ENCODE measurements at regions of chr1 and their contacts with region 1.

Region 1: GRCh38 chr1:66242646-66243547 is 291.1 kb upstream of the SGIP1 start:
- DNase-seq: peak; percentile 86
- H3K4me3 ChIP-seq: no peak overlapping the region
- CTCF ChIP-seq: peak; percentile 100

Region 2: DNA sequence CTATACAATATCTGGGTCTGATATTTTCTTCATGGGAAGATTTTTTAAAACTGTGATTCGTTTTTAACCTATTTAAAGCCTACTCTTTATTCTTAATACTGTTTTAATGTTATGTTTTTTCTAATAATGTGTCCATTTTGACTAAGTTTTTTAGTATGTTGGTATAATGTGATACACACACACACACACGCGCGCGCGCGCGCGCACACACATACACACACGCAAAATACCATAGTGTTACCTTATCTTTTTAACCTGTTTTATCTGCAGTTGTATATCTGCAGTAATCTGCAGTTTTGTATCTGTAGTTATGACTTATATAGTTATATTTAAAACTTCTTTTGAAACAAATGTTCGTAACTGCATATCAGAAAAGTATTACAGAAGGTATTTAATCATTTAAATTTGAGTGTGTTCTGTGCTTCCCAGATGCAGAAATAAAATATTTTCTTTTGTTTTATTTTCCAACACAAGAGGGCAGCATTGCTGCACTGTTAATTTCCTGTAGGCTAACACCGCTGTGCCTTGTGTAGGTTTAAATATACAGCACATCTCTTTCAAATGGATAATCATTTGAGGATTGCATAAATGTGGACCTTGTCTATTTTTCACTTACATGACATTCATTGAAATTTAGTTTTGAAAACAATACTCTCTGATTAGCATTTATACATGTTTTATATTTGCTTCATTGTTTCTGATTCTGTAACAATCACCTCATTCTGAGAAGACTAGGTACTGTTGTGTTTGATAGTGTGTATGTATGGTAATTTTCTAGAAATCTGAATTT is 284.1 kb before region 1 on chr1:
- in situ Hi-C with region 1: loop called (anchors 25 kb)
- DNase-seq: peak; percentile 49
- H3K4me3 ChIP-seq: no peak overlapping the region
- CTCF ChIP-seq: peak; percentile 36

Region 3: DNA sequence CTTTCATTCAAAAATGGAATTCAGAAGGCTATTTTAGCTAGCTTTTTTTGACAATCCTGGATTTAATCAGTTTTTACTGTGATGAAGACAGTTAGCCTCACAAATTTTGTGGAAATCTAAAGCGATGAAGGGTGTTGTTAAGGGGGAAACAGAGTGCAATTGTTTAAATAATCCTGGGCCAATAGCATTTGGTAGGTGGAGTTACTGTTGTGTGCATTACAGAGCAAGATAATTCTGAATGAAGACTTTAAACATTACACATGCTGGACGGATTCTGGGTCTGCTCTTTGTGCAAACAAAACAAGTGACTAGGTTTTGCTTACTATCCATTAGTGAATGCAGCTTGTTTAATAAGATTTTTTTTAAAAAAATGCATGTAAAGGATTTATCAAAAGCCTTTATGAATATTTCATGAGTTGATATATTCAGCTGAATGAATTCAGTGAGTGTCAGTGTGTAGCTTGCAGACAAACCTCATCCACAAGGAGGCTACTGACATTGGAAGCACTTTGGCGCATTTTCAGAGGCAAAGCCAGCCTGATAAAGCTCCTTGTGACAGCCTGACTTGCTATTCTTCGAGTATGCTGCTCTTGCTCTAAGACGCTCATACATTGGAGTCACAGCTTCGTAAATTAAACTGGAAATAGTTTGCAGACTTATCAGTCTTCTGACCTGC is 250.6 kb before region 1 on chr1:
- in situ Hi-C with region 1: no loop called
- DNase-seq: no peak
- H3K4me3 ChIP-seq: no peak overlapping the region
- CTCF ChIP-seq: no peak

Region 4: DNA sequence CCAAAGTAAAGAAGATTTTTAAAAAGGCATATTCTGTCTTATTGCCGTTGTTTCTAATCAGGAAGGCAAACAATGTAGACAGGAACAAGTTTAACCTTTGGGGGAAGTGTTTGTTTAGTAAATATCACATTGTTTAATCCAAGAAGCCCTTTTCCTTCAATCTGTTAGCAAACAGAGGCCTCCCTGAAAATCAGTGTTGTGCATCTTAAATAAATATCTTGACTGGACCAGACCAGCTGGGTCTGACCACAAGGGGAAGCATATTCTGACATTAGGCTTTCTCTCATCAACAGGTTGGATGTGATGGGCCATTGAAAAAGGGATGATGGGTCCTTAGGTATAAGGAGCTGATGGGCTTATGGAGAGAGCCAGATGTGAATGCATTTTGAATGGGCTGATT is 209.3 kb after region 1 on chr1:
- in situ Hi-C with region 1: loop called (anchors 10 kb)
- DNase-seq: no peak
- H3K4me3 ChIP-seq: no peak overlapping the region
- CTCF ChIP-seq: peak; percentile 26

Measured in astrocyte of the cerebellum (primary cell).